ENCODE measurements at regions of chr7 and their contacts with region 1.

Region 1: DNA sequence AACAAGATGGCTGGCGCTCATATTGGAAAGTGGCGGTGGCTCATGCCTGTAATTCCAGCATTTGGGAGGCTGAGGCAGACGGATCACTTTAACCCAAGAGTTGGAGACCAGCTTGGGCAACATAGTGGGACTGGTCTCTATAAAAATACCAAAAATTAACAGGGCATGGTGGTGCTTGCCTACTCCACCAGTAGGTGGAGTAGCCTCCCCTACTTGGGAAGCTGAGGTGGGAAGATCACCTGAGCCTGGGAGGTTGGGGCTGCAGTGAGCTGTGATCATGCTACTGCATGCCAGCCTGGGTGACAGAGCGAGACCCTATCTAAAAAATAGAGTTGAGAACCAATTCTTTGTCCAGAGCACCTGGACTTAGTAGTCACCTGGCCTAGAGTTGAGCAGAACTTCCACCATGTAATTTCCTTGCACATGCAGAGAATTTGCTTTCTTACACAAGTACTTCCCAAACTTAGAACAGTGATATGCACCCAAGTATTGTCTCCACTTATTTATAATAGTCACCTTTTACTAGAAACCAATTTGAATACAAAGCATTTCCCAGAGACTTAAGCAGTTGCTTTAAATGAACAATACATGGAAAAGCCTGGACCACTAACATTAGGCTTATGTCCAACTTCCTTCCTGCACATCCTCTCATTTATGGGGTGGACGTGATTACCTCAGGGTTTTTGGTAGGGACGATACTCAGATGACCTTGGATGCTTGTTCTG is 15.9 kb downstream of the LAMB4 start:
- DNase-seq: no peak
- CTCF ChIP-seq: peak; percentile 63

Region 2: DNA sequence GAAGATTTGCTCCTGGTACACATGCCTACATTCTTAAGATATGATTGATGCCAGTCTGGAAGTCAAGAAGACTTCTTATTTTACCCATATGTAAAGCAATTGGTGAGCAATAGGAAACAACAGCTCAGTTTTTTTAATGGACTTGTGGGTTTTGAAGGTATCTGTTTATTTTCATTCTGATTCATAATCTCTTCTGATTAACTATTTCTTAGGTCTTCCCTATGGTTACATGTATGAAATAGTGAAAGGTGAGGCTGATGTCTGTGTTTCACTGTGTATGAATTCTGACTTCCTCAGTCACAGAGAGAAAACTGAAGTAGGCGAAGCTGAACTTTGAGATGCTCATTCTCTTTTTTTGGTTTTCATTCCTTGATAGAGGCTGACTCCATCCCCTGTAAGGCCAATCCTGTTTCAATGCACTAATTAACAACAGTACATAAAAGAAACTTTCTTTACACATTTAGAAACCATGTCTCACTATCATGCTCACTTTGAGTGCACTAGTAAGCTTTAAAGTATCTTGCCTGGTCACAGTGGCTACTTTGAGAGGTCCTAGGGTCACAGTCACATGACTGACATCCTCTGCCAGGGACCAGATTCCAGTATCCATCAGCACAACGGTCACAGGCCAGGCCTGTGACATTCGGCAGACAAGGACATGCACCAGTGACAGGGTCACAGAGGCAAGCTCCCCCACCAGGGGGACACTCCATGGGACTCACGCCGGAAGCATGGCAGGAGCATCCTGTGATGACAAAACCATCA is 51.8 kb before region 1 on chr7:
- in situ Hi-C with region 1: no loop called
- DNase-seq: no peak
- CTCF ChIP-seq: no peak

Region 3: GRCh38 chr7:108146070-108146837 is 32.0 kb after region 1 on chr7:
- in situ Hi-C with region 1: loop called (anchors 5 kb)
- DNase-seq: peak; percentile 38
- CTCF ChIP-seq: peak; percentile 63

Region 4: DNA sequence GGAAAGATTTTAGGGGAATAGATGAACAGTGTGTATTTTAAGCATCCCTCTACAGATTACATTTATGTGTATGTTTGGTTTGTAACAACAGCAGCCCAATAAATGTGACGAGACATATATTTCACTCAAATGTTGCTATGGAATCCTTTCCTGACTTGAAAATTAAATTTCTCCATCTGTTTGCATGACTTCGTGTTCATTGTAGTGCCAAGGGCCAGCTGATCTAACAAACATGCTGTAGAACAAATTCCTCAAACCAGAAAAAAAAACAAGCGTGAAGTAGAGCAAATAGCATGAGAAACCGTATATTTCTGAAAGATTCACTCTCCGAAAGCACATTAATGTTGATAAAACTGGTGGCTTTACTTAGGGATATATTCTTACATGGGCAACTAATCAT is 254.2 kb after region 1 on chr7:
- in situ Hi-C with region 1: no loop called
- DNase-seq: no peak
- CTCF ChIP-seq: no peak

Region 5: GRCh38 chr7:108395426-108395825 is 281.1 kb after region 1 on chr7:
- in situ Hi-C with region 1: no loop called
- DNase-seq: no peak
- CTCF ChIP-seq: no peak

Measured in GM13976 (cell line).